A549 (cell line): ENCODE measurements at regions of chr19 and their contacts with region 1.

Region 1: DNA sequence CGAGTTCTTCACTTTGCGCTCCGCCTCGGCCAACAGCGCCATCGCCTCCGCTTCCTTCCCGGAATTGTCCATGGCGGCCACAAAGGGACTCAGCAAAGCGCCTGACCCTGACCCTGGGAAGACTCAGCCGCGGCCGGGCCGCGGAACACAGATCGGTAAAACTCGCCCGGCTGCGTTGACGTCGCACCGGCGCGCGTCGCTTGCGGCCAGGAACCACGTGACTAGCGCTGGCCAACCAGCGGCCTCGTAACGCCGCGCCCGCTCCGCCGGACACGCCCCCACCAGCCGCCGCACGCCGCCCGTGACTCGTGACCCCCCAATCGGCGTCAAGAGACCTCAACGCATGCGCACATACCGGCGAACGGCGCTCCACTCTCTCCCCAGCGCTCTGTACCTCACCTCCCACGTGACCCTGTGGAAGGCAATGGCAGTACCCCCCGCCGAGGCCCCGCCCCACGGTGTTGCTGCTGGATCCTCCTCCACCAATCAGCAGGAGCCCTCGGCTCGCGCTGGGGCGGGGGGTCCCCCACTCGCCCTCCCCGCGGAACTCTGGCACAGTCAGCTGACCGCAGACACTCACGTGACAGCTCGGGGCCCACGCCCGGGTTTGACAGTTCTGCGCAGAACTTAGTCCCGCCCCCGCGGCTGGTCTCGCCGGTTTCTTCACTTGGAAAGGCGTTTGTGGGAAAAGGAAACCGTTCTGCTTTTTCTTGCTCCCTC is at the start of gene NAPA:
- DNase-seq: peak; percentile 100
- ATAC-seq: peak; percentile 87 to 96
- H3K4me3 ChIP-seq: peak within 1 kb of the TSS; percentile 89
- H3K27ac ChIP-seq: peak within 1 kb of the TSS; percentile 90 to 92
- H3K4me1 ChIP-seq: peaks cover 28% of the 10 kb centered on the region
- CTCF ChIP-seq: no peak
- EP300 ChIP-seq: no peak
- POLR2A ChIP-seq: peak; percentile 67
- RAD21 ChIP-seq: peak; percentile 64 to 79; a peak in 4 of 5 replicates
- polyA plus RNA-seq, gene NAPA: 69.6 and 74.3 TPM in 2 replicates

Region 2: DNA sequence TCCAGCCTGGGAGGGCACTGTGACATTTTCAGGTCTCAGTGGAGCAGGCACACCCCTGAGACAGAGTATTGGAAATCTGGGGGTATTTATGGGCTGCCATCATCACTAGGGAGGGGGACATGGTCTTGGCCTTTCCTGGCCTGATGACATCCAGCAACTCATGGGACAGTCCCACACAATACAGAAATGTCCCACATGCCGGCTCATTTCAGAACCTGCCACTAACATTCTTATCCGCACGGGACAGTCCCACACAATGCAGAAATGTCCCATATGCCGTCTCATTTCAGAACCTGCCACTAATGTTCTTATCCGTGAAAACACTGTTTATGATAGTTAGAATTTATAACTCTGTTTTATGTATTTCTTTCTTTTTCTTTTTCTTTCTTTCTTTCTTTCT is 53.2 kb before region 1 on chr19:
- CTCF ChIA-PET with region 1: no interaction called
- POLR2A ChIA-PET with region 1: no interaction called
- DNase-seq: no peak
- ATAC-seq: no peak
- H3K4me3 ChIP-seq: no peak overlapping the region
- H3K27ac ChIP-seq: no peak overlapping the region
- H3K4me1 ChIP-seq: no peaks in the 10 kb centered on the region
- CTCF ChIP-seq: no peak
- EP300 ChIP-seq: no peak
- POLR2A ChIP-seq: no peak
- RAD21 ChIP-seq: no peak

Region 3: DNA sequence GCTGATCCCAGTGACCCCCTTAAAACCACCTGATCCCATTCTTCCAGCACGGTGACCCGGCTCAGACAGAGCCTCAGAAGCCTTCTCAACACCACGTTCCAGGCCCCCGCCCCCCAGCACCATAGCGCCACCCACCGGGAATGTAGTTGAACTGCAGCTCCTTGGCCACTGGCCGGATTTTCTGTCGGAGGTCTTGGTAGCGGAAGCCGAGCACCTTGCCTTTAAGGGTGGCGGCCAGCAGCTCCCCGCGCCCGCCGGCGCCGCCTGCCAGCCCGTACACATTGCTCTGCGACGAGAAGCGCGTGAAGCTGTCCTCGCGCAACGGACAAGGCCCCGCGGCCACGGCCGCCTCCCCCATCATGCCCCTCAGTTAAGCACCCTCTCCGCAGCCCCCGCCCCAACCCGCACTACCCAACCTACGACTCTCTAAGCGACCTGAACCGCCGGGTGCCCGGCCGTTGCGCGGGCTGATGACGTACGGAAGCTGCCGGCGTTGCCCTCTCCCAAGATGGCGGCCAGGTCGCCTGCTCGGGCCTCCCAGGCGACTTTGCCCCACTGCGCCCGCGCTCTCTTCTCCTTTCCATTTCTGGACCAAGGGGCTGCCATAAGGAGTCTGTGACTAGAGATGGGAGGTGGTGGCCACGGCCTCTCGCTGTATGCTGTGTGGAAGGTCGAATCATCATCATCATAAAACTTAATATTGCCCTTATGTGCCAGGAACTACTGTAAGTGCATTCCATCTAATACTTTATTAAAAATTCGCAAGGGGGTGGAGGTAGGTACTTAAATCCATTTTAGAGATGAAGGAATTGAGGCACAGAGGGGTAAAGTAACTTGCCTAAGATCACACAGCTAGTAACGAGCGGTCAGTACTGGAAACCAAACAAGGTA is 31.0 kb before region 1 on chr19 and contains the start of gene KPTN:
- CTCF ChIA-PET with region 1: interaction called, 30 read pairs
- POLR2A ChIA-PET with region 1: interaction called, 13 read pairs
- DNase-seq: peak; percentile 96 to 99
- ATAC-seq: peak; percentile 84 to 90
- H3K4me3 ChIP-seq: peak within 1 kb of the TSS; percentile 53
- H3K27ac ChIP-seq: peak within 1 kb of the TSS; percentile 96 to 97
- H3K4me1 ChIP-seq: peaks cover 12% of the 10 kb centered on the region; the same call in 2 of the 3 replicates
- CTCF ChIP-seq: peak; percentile 98
- EP300 ChIP-seq: no peak
- POLR2A ChIP-seq: peak; percentile 88
- RAD21 ChIP-seq: peak; percentile 70 to 75
- polyA plus RNA-seq, gene KPTN: 10.6 and 12.5 TPM in 2 replicates

Region 4: GRCh38 chr19:47531640-47532387 is 16.8 kb after region 1 on chr19:
- CTCF ChIA-PET with region 1: interaction called, 39 read pairs
- POLR2A ChIA-PET with region 1: no interaction called
- DNase-seq: no peak
- ATAC-seq: peak; percentile 37 to 69; a peak in 3 of 6 replicates
- H3K4me3 ChIP-seq: no peak overlapping the region
- H3K27ac ChIP-seq: no peak overlapping the region; a peak in 1 of 6 replicates
- H3K4me1 ChIP-seq: no peaks in the 10 kb centered on the region
- CTCF ChIP-seq: no peak
- EP300 ChIP-seq: no peak
- POLR2A ChIP-seq: no peak
- RAD21 ChIP-seq: no peak

Region 5: DNA sequence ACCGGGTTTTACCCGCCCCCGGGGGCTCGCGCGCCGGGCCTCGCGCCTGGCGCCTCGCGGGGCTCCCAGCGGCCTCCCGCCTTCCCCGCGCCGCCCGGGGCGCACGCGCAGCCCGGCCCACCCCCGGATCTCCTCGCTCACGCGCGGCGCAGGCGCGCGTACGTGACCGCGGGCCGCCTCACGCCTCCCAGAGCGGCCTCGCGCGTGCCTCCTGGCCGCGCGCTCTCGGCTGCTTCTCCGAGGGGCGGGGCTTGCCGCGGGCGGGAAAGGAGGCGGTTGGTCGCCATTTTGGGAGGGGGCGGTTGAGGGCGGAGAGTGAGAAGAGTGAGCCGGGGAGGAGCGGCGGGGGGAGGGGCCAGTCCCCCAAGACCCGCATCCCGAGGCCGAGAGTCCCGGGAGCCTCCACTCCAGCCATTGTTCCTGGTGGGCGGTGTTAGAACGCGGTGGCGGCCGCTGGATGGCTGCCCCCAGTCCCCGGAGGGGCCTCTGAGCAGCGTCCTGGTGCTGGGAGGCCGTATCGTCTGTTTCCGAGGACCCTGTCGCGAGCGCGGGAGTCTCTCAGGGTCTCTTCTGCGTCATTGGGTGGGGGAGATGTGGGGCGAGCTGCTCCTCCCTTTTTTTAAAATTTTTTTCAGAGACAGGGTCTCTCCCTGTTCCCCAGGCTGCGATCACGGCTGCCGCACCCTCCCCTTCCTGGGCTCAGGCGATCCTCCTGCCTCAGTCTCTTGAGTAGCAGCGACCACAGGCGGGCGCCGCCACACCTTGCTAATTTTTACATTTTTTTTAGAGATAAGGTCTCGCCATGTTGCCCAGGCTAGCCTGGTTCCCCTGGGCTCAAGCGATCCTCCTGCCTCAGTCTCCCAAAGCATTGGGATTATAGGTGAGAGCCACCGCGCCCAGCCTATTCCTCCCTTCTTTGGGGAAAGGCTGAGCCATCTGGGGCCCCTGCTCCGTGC is 58.3 kb after region 1 on chr19 and contains the start of gene ZNF541:
- CTCF ChIA-PET with region 1: interaction called, 11 read pairs
- POLR2A ChIA-PET with region 1: no interaction called
- DNase-seq: no peak
- ATAC-seq: no peak
- H3K4me3 ChIP-seq: no peak within 1 kb of the TSS
- H3K27ac ChIP-seq: no peak within 1 kb of the TSS
- H3K4me1 ChIP-seq: no peaks in the 10 kb centered on the region
- CTCF ChIP-seq: no peak
- EP300 ChIP-seq: no peak
- POLR2A ChIP-seq: no peak
- RAD21 ChIP-seq: no peak
- polyA plus RNA-seq, gene ZNF541: not detected in 2 replicates

Region 6: GRCh38 chr19:47608074-47608918 is 93.3 kb after region 1 on chr19:
- CTCF ChIA-PET with region 1: interaction called, 40 read pairs
- POLR2A ChIA-PET with region 1: interaction called, 3 read pairs
- DNase-seq: peak; percentile 94
- ATAC-seq: peak; percentile 85 to 93
- H3K4me3 ChIP-seq: peak overlapping the region; percentile 92
- H3K27ac ChIP-seq: peak overlapping the region; percentile 93 to 96
- H3K4me1 ChIP-seq: peaks cover 21% of the 10 kb centered on the region
- CTCF ChIP-seq: no peak
- EP300 ChIP-seq: no peak
- POLR2A ChIP-seq: peak; percentile 73
- RAD21 ChIP-seq: no peak